ENCODE measurements at regions of chrX and their contacts with region 1.

Region 1: GRCh38 chrX:10722851-10723250 is 102.5 kb upstream of the MID1 start:
- DNase-seq: peak; percentile 47 to 51
- ATAC-seq: peak; percentile 83 to 88; a peak in 5 of 6 replicates
- H3K4me3 ChIP-seq: no peak overlapping the region
- H3K27ac ChIP-seq: 0 out of 6 replicates have a peak overlapping the region, but pooled peaks of 1 of the 2 experiments have one; percentile 20
- H3K4me1 ChIP-seq: no peaks in the 10 kb centered on the region; the same call in 2 of the 3 replicates
- CTCF ChIP-seq: peak; percentile 66
- EP300 ChIP-seq: no peak
- POLR2A ChIP-seq: no peak
- RAD21 ChIP-seq: peak; percentile 76 to 77

Region 2: GRCh38 chrX:10656214-10656613 is 66.6 kb before region 1 on chrX:
- CTCF ChIA-PET with region 1: no interaction called
- POLR2A ChIA-PET with region 1: no interaction called
- DNase-seq: no peak
- ATAC-seq: no peak
- H3K4me3 ChIP-seq: no peak overlapping the region
- H3K27ac ChIP-seq: no peak overlapping the region
- H3K4me1 ChIP-seq: no peaks in the 10 kb centered on the region
- CTCF ChIP-seq: no peak
- EP300 ChIP-seq: no peak
- POLR2A ChIP-seq: no peak
- RAD21 ChIP-seq: no peak

Region 3: DNA sequence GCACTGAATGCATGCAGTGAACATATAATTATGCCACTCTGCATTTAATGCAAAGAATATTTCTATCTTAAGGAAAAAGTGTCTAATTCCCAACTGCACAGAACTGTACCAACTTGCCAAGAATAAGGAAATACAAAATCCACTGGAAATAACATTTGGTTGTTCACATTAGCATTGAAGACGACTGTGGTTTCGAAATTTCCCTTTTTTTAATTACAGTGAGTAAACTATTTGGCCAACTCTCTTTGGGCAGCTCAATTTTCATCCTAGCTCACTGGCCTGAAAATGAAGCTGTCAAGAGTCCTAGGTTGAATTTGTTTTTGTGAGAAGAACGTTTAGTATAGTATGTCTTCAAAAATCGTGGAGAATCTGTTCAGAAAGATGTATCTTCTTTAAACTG is 20.8 kb before region 1 on chrX:
- CTCF ChIA-PET with region 1: interaction called, 12 read pairs
- POLR2A ChIA-PET with region 1: no interaction called
- DNase-seq: no peak
- ATAC-seq: no peak
- H3K4me3 ChIP-seq: no peak overlapping the region
- H3K27ac ChIP-seq: no peak overlapping the region
- H3K4me1 ChIP-seq: no peaks in the 10 kb centered on the region
- CTCF ChIP-seq: no peak
- EP300 ChIP-seq: no peak
- POLR2A ChIP-seq: no peak
- RAD21 ChIP-seq: no peak

Region 4: GRCh38 chrX:10769195-10769594 is 46.3 kb after region 1 on chrX:
- CTCF ChIA-PET with region 1: interaction called, 20 read pairs
- POLR2A ChIA-PET with region 1: no interaction called
- DNase-seq: peak; percentile 32 to 46
- ATAC-seq: peak; percentile 82 to 94
- H3K4me3 ChIP-seq: no peak overlapping the region
- H3K27ac ChIP-seq: no peak overlapping the region; a peak in 1 of 6 replicates
- H3K4me1 ChIP-seq: peaks cover 18% of the 10 kb centered on the region
- CTCF ChIP-seq: peak; percentile 61
- EP300 ChIP-seq: no peak
- POLR2A ChIP-seq: no peak
- RAD21 ChIP-seq: peak; percentile 46 to 60; a peak in 4 of 5 replicates

Region 5: DNA sequence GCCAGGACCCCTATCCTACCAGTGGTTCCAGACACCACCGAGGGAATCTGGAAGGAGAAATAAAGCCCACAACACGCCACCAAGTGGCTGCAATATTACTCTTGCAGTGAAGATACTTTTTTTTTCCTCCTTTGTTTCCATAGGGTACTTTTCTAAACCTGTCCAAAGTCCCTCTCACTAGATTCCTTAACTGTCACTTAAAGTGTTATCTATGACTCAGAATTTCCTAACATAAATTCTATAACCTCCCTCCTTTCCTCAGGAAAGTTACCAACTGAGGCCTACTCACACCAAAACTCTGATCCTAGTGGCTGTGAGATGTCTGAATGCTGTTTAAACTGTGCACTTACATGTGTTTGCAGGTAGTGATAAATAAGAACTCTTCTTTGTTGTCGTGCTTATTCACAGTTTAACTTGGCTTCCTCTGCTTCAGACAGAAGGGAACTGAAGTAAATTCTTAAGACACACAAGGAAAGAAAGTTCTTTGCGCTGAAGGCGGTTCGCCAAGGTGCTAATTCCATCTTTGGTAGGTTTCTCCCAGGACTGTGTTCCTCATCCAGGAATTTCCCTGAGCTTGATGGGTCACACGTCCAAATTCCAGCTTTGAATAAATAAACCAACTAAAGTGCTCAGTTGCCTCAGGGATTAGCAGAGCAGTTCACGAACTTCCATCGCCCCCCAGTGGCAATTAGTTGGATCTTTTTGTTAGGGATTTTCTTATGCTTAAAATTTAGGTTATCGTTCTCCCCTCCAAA is 377.6 kb after region 1 on chrX:
- CTCF ChIA-PET with region 1: interaction called, 19 read pairs
- POLR2A ChIA-PET with region 1: no interaction called
- DNase-seq: peak; percentile 36 to 73
- ATAC-seq: peak; percentile 83 to 94
- H3K4me3 ChIP-seq: no peak overlapping the region
- H3K27ac ChIP-seq: peak overlapping the region; percentile 63 to 83
- H3K4me1 ChIP-seq: peaks cover 11% of the 10 kb centered on the region
- CTCF ChIP-seq: peak; percentile 66
- EP300 ChIP-seq: no peak
- POLR2A ChIP-seq: no peak
- RAD21 ChIP-seq: peak; percentile 75 to 79